ENCODE measurements at regions of chr2 and their contacts with region 1.

Region 1: DNA sequence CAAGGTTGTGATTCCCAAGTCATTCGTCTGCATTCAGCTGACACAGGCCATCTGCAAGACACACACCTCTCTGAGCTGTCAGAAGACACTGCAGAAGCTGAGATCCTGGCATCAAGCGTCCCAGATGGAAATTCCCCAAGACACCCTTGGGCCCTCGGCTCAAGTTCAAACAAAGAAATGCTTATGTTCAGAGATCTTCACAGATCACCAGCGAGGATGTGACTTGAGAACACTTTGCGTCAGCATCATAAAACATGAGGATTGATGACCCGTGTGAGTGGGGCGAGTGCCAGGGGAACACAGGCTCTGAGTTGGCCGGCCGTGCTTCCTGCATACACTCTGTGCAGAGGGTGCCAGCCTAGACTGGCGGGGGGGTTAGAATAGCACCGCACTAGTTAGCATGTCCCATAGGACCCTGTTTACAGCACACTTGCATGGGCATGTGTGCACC is 36.8 kb downstream of the KCNIP3 start:
- DNase-seq: no peak
- H3K4me3 ChIP-seq: no peak overlapping the region
- H3K27ac ChIP-seq: no peak overlapping the region
- H3K4me1 ChIP-seq: no peaks in the 10 kb centered on the region
- H3K27me3 ChIP-seq: peaks cover 0 to 4% (median 0%) of the 10 kb centered on the region in 5 experiments

Region 2: GRCh38 chr2:95323347-95324185 is 10.3 kb before region 1 on chr2:
- CTCF ChIA-PET with region 1: no interaction called
- POLR2A ChIA-PET with region 1: no interaction called
- DNase-seq: peak in 2 of 3 donors; percentile 7 to 12
- H3K4me3 ChIP-seq: no peak overlapping the region
- H3K27ac ChIP-seq: no peak overlapping the region
- H3K4me1 ChIP-seq: no peaks in the 10 kb centered on the region
- H3K27me3 ChIP-seq: no peaks in the 10 kb centered on the region

Region 3: GRCh38 chr2:95345566-95346230 is 11.8 kb after region 1 on chr2:
- CTCF ChIA-PET with region 1: interaction called, 13 read pairs
- POLR2A ChIA-PET with region 1: no interaction called
- DNase-seq: peak; percentile 64 to 71 (median 69)
- H3K4me3 ChIP-seq: peak overlapping the region; percentile 34 to 73 (median 58)
- H3K27ac ChIP-seq: no peak overlapping the region
- H3K4me1 ChIP-seq: peaks cover 0 to 19% (median 13%) of the 10 kb centered on the region in 4 experiments
- H3K27me3 ChIP-seq: peaks cover 0 to 67% (median 17%) of the 10 kb centered on the region in 5 experiments

Region 4: GRCh38 chr2:95374921-95375471 is 41.1 kb after region 1 on chr2:
- CTCF ChIA-PET with region 1: no interaction called
- POLR2A ChIA-PET with region 1: no interaction called
- DNase-seq: no peak
- H3K4me3 ChIP-seq: no peak overlapping the region
- H3K27ac ChIP-seq: no peak overlapping the region
- H3K4me1 ChIP-seq: peaks cover 0 to 2% (median 0%) of the 10 kb centered on the region in 4 experiments
- H3K27me3 ChIP-seq: peaks cover 0 to 1% (median 0%) of the 10 kb centered on the region in 5 experiments